ENCODE measurements at regions of chr2 and their contacts with region 1.

Region 1: GRCh38 chr2:85551698-85552678 is 9.3 kb downstream of the GGCX start:
- DNase-seq: peak; percentile 83 to 94 (median 89)
- ATAC-seq: peak; percentile 99
- H3K4me3 ChIP-seq: no peak overlapping the region
- H3K4me3 Mint-ChIP-seq: no peak overlapping the region
- H3K27ac ChIP-seq: no peak overlapping the region
- H3K27ac Mint-ChIP-seq: peak overlapping the region; percentile 22
- H3K4me1 ChIP-seq: peaks cover 4% of the 10 kb centered on the region
- H3K4me1 Mint-ChIP-seq: peaks cover 7% of the 10 kb centered on the region
- H3K27me3 ChIP-seq: no peaks in the 10 kb centered on the region
- H3K27me3 Mint-ChIP-seq: no peaks in the 10 kb centered on the region
- CTCF ChIP-seq: peak; percentile 87

Region 2: GRCh38 chr2:85057226-85057962 is 494.6 kb before region 1 on chr2:
- CTCF ChIA-PET with region 1: no interaction called
- POLR2A ChIA-PET with region 1: no interaction called
- intact Hi-C with region 1: no loop called
- DNase-seq: peak in 1 of 14 experiments; percentile 14
- ATAC-seq: no peak
- H3K4me3 ChIP-seq: no peak overlapping the region
- H3K4me3 Mint-ChIP-seq: no peak overlapping the region
- H3K27ac ChIP-seq: no peak overlapping the region
- H3K27ac Mint-ChIP-seq: peak overlapping the region; percentile 57
- H3K4me1 ChIP-seq: peaks cover 5% of the 10 kb centered on the region
- H3K4me1 Mint-ChIP-seq: peaks cover 46% of the 10 kb centered on the region
- H3K27me3 ChIP-seq: no peaks in the 10 kb centered on the region
- H3K27me3 Mint-ChIP-seq: no peaks in the 10 kb centered on the region
- CTCF ChIP-seq: no peak

Region 3: GRCh38 chr2:85266146-85267041 is 285.6 kb before region 1 on chr2:
- CTCF ChIA-PET with region 1: no interaction called
- POLR2A ChIA-PET with region 1: no interaction called
- intact Hi-C with region 1: loop called in 1 of 2 experiments (anchors 5 kb)
- DNase-seq: peak; percentile 47 to 84 (median 66)
- ATAC-seq: peak; percentile 52
- H3K4me3 ChIP-seq: no peak overlapping the region
- H3K4me3 Mint-ChIP-seq: no peak overlapping the region
- H3K27ac ChIP-seq: no peak overlapping the region
- H3K27ac Mint-ChIP-seq: no peak overlapping the region
- H3K4me1 ChIP-seq: no peaks in the 10 kb centered on the region
- H3K4me1 Mint-ChIP-seq: no peaks in the 10 kb centered on the region
- H3K27me3 ChIP-seq: no peaks in the 10 kb centered on the region
- H3K27me3 Mint-ChIP-seq: no peaks in the 10 kb centered on the region
- CTCF ChIP-seq: peak; percentile 99

Region 4: GRCh38 chr2:85390941-85391669 is 160.9 kb before region 1 on chr2:
- CTCF ChIA-PET with region 1: interaction called, 23 read pairs
- POLR2A ChIA-PET with region 1: interaction called, 8 read pairs
- intact Hi-C with region 1: loop called (anchors 1 kb)
- DNase-seq: peak; percentile 66 to 85 (median 72)
- ATAC-seq: peak; percentile 69
- H3K4me3 ChIP-seq: no peak overlapping the region
- H3K4me3 Mint-ChIP-seq: no peak overlapping the region
- H3K27ac ChIP-seq: no peak overlapping the region
- H3K27ac Mint-ChIP-seq: peak overlapping the region; percentile 44
- H3K4me1 ChIP-seq: peaks cover 15% of the 10 kb centered on the region
- H3K4me1 Mint-ChIP-seq: peaks cover 14% of the 10 kb centered on the region
- H3K27me3 ChIP-seq: no peaks in the 10 kb centered on the region
- H3K27me3 Mint-ChIP-seq: no peaks in the 10 kb centered on the region
- CTCF ChIP-seq: peak; percentile 77

Region 5: DNA sequence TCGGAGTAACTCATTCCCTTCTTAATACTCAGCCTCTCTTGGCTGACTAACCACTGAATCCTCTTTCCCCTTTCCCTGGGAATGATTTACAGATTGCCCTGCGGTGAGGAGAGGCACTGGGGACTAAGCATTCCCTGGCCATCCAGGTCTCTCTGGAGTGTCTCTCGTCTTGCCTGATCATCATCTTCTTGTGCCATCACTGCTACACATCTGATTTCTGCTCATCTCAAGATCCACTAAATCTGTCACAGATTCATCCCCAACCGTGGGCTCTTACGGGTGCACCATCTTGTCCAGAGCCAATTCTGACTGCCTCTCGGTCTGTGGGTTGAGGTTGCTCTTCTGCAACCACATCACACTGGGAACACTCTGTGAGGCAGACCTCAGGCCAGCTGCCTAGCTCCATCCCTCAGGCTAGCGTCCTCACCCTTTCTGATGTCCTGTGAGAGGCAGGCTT is 104.0 kb after region 1 on chr2:
- CTCF ChIA-PET with region 1: no interaction called
- POLR2A ChIA-PET with region 1: no interaction called
- intact Hi-C with region 1: no loop called
- DNase-seq: no peak
- ATAC-seq: no peak
- H3K4me3 ChIP-seq: no peak overlapping the region
- H3K4me3 Mint-ChIP-seq: no peak overlapping the region
- H3K27ac ChIP-seq: no peak overlapping the region
- H3K27ac Mint-ChIP-seq: no peak overlapping the region
- H3K4me1 ChIP-seq: no peaks in the 10 kb centered on the region
- H3K4me1 Mint-ChIP-seq: no peaks in the 10 kb centered on the region
- H3K27me3 ChIP-seq: no peaks in the 10 kb centered on the region
- H3K27me3 Mint-ChIP-seq: no peaks in the 10 kb centered on the region
- CTCF ChIP-seq: no peak

Measured in CD4-positive, alpha-beta T cell (primary cell).